Activated CD4-positive, alpha-beta memory T cell treated with anti-CD3 and anti-CD28 coated beads, Interleukin-2, amount 10 ng/mL, durations not matched to agents 7 days and 5 days (primary cell): ENCODE measurements at regions of chr4 and their contacts with region 1.

Region 1: GRCh38 chr4:102610007-102610406 is 108.8 kb downstream of the NFKB1 start:
- DNase-seq: no peak
- H3K4me3 Mint-ChIP-seq: no peak overlapping the region
- H3K27ac Mint-ChIP-seq: peak overlapping the region; percentile 42
- H3K4me1 Mint-ChIP-seq: peaks cover 90% of the 10 kb centered on the region
- H3K27me3 Mint-ChIP-seq: no peaks in the 10 kb centered on the region

Region 2: GRCh38 chr4:102344954-102345794 is 264.8 kb before region 1 on chr4 and contains the start of gene SLC39A8:
- CTCF ChIA-PET with region 1: interaction called, 6 read pairs
- POLR2A ChIA-PET with region 1: interaction called, 16 read pairs
- DNase-seq: peak; percentile 91
- H3K4me3 Mint-ChIP-seq: peak within 1 kb of the TSS; percentile 78
- H3K27ac Mint-ChIP-seq: peak within 1 kb of the TSS; percentile 92
- H3K4me1 Mint-ChIP-seq: peaks cover 44% of the 10 kb centered on the region
- H3K27me3 Mint-ChIP-seq: peaks cover 7% of the 10 kb centered on the region
- total RNA-seq, gene SLC39A8: 101 to 103 TPM

Region 3: GRCh38 chr4:102578819-102579218 is 31.2 kb before region 1 on chr4:
- CTCF ChIA-PET with region 1: interaction called, 7 read pairs
- POLR2A ChIA-PET with region 1: interaction called, 73 read pairs
- DNase-seq: no peak
- H3K4me3 Mint-ChIP-seq: no peak overlapping the region
- H3K27ac Mint-ChIP-seq: no peak overlapping the region
- H3K4me1 Mint-ChIP-seq: peaks cover 74% of the 10 kb centered on the region
- H3K27me3 Mint-ChIP-seq: no peaks in the 10 kb centered on the region

Region 4: DNA sequence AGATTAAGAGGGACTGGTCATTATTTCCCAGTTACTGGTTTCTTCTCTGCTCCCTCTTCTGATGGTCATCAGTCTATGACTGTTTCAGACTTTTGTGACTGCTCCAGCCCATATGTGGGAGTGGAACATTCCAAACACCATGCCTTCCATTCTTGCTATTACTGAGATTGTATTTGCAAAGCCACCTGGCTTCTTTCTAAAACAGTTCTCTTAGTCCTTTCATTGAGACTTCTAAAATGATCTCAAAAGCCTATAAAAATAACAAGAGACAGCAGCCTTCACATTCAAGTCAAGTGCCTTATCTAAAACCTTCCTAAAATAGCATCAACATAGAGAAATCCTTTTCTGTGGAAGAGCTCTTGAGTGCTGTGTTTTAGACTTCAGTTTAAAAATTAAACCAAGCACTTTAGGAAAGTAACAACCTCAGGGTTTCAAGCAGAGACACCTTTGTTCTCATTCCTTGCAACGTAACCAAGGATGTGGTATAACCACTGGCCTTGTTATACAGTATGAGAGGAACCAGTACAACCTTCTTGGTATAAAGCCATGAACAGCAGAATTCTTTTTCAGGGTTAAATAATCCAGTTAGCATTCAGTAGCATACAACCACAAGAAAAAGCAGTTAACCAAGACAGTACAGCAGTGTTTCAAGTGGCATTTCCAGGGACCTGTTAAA is 11.8 kb before region 1 on chr4:
- CTCF ChIA-PET with region 1: interaction called, 6 read pairs
- POLR2A ChIA-PET with region 1: interaction called, 48 read pairs
- DNase-seq: no peak
- H3K4me3 Mint-ChIP-seq: peak overlapping the region; percentile 43
- H3K27ac Mint-ChIP-seq: peak overlapping the region; percentile 92
- H3K4me1 Mint-ChIP-seq: peaks cover 73% of the 10 kb centered on the region
- H3K27me3 Mint-ChIP-seq: no peaks in the 10 kb centered on the region

Region 5: DNA sequence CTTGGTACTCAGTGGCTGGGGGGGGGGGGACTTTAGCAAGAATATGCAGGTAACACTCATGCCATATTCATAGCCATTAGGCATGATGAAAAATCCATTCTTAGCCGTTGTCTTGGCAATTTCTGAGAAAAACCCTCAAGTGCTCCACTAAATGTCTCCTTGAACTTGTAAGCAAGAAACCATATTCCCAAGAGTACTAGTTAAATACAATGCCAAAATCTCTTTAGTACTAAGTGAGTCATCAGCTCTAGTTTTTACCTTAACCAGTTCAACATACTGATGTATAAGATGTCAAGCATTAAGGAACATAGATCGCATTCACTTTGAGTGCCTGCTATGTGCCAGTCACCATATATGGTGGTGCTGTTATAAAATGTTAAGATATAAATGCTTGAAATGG is 189.8 kb after region 1 on chr4:
- CTCF ChIA-PET with region 1: no interaction called
- POLR2A ChIA-PET with region 1: no interaction called
- DNase-seq: no peak
- H3K4me3 Mint-ChIP-seq: no peak overlapping the region
- H3K27ac Mint-ChIP-seq: no peak overlapping the region
- H3K4me1 Mint-ChIP-seq: peaks cover 7% of the 10 kb centered on the region
- H3K27me3 Mint-ChIP-seq: no peaks in the 10 kb centered on the region

Region 6: GRCh38 chr4:102868781-102869568 is 259.0 kb after region 1 on chr4 and contains the start of gene CISD2:
- CTCF ChIA-PET with region 1: no interaction called
- POLR2A ChIA-PET with region 1: interaction called, 13 read pairs
- DNase-seq: peak; percentile 93
- H3K4me3 Mint-ChIP-seq: peak within 1 kb of the TSS; percentile 92
- H3K27ac Mint-ChIP-seq: peak within 1 kb of the TSS; percentile 99
- H3K4me1 Mint-ChIP-seq: peaks cover 71% of the 10 kb centered on the region
- H3K27me3 Mint-ChIP-seq: no peaks in the 10 kb centered on the region
- total RNA-seq, gene CISD2: 37.9 to 39.8 TPM